B cell (primary cell): ENCODE measurements at regions of chr2 and their contacts with region 1.

Region 1: GRCh38 chr2:58046585-58047372 is at the start of gene VRK2:
- DNase-seq: peak; percentile 94
- ATAC-seq: peak; percentile 91
- H3K4me3 ChIP-seq: peak within 1 kb of the TSS; percentile 71 to 92 (median 77)
- H3K4me3 Mint-ChIP-seq: peak within 1 kb of the TSS; percentile 96
- H3K27ac ChIP-seq: peak within 1 kb of the TSS; percentile 91 to 95
- H3K27ac Mint-ChIP-seq: peak within 1 kb of the TSS; percentile 99
- H3K4me1 ChIP-seq: peaks cover 27 to 29% of the 10 kb centered on the region in 2 donors
- H3K4me1 Mint-ChIP-seq: peaks cover 48% of the 10 kb centered on the region
- H3K27me3 ChIP-seq: no peaks in the 10 kb centered on the region
- H3K27me3 Mint-ChIP-seq: no peaks in the 10 kb centered on the region
- CTCF ChIP-seq: peak; percentile 24
- total RNA-seq, gene VRK2: 33.4 and 35.5 TPM in 2 replicates

Region 2: DNA sequence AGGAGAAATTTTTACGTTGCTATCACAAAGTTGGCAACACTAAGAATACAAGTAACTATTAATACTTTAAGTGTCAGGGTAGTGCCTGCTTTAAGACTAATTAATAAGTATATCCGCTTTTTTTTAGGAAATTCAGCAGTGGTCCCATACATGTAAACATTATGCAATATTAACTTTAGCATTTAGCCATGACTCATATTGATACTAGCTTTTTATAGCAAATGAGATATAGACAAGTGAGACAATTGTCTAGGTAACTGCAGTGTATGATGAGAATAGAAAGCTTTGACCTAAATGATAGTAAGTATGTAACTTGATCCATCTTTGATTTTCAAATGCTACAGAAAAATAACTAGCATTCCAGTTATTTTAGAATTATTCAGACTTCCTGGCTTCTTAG is 27.6 kb before region 1 on chr2:
- CTCF ChIA-PET with region 1: interaction called, 4 read pairs
- POLR2A ChIA-PET with region 1: interaction called, 12 read pairs
- intact Hi-C with region 1: loop called (anchors 1 kb)
- DNase-seq: no peak
- ATAC-seq: no peak
- H3K4me3 ChIP-seq: no peak overlapping the region
- H3K4me3 Mint-ChIP-seq: no peak overlapping the region
- H3K27ac ChIP-seq: no peak overlapping the region
- H3K27ac Mint-ChIP-seq: no peak overlapping the region
- H3K4me1 ChIP-seq: peaks cover 9 to 15% of the 10 kb centered on the region in 2 donors
- H3K4me1 Mint-ChIP-seq: peaks cover 19% of the 10 kb centered on the region
- H3K27me3 ChIP-seq: no peaks in the 10 kb centered on the region
- H3K27me3 Mint-ChIP-seq: no peaks in the 10 kb centered on the region
- CTCF ChIP-seq: no peak

Region 3: DNA sequence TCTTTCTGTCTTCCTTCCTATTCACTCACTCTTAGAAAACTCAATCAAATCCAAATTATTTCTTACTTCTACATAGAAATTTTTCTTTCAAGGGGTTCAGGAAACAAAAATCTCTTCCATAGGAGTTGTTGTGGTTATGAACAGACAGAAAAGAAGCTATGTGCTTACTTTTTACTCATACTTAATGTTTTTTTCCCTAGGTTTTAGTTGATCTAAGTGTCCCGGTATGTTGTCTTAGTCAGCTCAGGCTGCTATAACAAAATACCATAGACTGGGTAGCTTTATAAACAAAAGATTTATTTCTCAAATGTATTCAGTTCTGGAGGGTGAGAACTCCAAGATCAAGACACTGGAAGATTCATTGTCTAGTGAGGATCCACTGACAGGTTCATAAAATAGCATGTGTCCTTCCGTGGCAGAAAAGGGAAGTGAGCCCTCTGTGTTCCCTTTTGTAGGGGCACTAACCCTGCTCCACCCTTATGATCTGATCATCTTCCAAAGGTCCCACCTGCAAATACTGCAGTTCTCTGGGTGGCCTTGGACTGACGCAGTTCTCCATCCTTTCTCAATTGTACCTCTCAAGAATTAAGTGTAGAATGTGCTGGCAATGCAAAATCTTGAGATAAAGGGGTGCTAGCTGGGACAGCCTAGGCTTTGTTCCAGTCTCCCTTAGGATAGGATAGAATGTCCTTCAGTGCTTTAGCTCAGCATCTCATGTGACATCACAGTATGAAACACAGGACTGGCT is 14.6 kb before region 1 on chr2:
- CTCF ChIA-PET with region 1: interaction called, 3 read pairs
- POLR2A ChIA-PET with region 1: interaction called, 14 read pairs
- intact Hi-C with region 1: loop called (anchors 1 kb)
- DNase-seq: peak; percentile 78
- ATAC-seq: peak; percentile 94
- H3K4me3 ChIP-seq: peak overlapping the region in 1 of 5 experiments; percentile 5
- H3K4me3 Mint-ChIP-seq: peak overlapping the region; percentile 27
- H3K27ac ChIP-seq: peak overlapping the region in 1 of 2 donors; percentile 40
- H3K27ac Mint-ChIP-seq: peak overlapping the region; percentile 74
- H3K4me1 ChIP-seq: peaks cover 27 to 35% of the 10 kb centered on the region in 2 donors
- H3K4me1 Mint-ChIP-seq: peaks cover 50% of the 10 kb centered on the region
- H3K27me3 ChIP-seq: no peaks in the 10 kb centered on the region
- H3K27me3 Mint-ChIP-seq: no peaks in the 10 kb centered on the region
- CTCF ChIP-seq: no peak

Region 4: GRCh38 chr2:58240670-58241545 is 194.1 kb after region 1 on chr2 and contains the start of gene FANCL:
- CTCF ChIA-PET with region 1: no interaction called
- POLR2A ChIA-PET with region 1: no interaction called
- intact Hi-C with region 1: loop called (anchors 2 kb)
- DNase-seq: peak; percentile 85
- ATAC-seq: peak; percentile 82
- H3K4me3 ChIP-seq: peak within 1 kb of the TSS; percentile 86 to 97 (median 87)
- H3K4me3 Mint-ChIP-seq: peak within 1 kb of the TSS; percentile 96
- H3K27ac ChIP-seq: peak within 1 kb of the TSS; percentile 70 to 74
- H3K27ac Mint-ChIP-seq: peak within 1 kb of the TSS; percentile 90
- H3K4me1 ChIP-seq: peaks cover 12 to 15% of the 10 kb centered on the region in 2 donors
- H3K4me1 Mint-ChIP-seq: peaks cover 38% of the 10 kb centered on the region
- H3K27me3 ChIP-seq: no peaks in the 10 kb centered on the region
- H3K27me3 Mint-ChIP-seq: no peaks in the 10 kb centered on the region
- CTCF ChIP-seq: no peak
- total RNA-seq, gene FANCL: 23.3 and 31.7 TPM in 2 replicates